ENCODE measurements at regions of chr20 and their contacts with region 1.

Region 1: DNA sequence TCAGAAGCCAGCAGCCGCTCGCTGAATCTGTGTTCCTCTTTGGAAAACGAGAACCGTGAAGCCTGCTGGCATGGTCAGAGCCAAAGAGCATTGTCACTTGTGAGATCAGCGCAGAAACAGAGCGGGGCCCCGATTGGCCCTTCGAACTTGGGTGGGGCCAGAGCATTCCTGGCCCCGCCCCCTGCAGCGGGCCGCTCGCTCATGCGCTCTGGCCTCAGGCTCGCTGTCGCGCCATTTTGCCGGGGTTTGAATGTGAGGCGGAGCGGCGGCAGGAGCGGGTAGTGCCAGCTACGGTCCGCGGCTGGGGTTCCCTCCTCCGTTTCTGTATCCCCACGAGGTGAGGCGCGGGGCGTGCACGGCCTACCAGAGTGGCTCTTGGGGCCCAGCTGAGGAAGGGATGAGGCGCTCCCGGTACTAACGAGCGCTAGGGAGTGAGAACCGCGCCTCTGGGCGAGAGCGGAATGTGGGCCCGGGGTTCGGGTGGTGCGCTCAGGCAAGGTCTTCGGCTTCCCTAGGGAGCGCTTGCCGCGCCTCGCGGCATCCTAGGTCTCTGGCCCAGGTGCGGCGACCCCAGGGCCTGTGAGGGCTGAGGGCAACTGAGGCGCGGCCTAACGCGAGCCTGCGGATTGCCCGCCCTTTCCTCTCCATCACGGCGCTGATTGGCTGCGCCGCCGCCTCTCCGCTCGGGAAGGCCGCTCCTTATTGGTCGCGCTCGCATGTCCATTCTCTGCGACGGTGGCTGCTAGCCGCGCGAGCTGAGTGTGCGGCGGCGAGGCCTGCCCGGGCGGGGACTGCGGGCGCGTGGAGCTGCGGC is at the start of gene CSE1L:
- DNase-seq: peak; percentile 95
- ATAC-seq: peak; percentile 86
- H3K4me3 Mint-ChIP-seq: peak within 1 kb of the TSS; percentile 97
- H3K27ac Mint-ChIP-seq: peak within 1 kb of the TSS; percentile 94
- H3K4me1 Mint-ChIP-seq: peaks cover 31% of the 10 kb centered on the region
- H3K27me3 Mint-ChIP-seq: no peaks in the 10 kb centered on the region
- CTCF ChIP-seq: no peak
- total RNA-seq, gene CSE1L: 53.2 and 58.8 TPM in 2 replicates

Region 2: GRCh38 chr20:48921151-48921898 is 125.0 kb before region 1 on chr20 and contains the start of gene ARFGEF2:
- CTCF ChIA-PET with region 1: no interaction called
- POLR2A ChIA-PET with region 1: interaction called, 4 read pairs
- intact Hi-C with region 1: loop called (anchors 5 kb)
- DNase-seq: peak; percentile 96
- ATAC-seq: peak; percentile 90
- H3K4me3 Mint-ChIP-seq: peak within 1 kb of the TSS; percentile 93
- H3K27ac Mint-ChIP-seq: peak within 1 kb of the TSS; percentile 95
- H3K4me1 Mint-ChIP-seq: peaks cover 58% of the 10 kb centered on the region
- H3K27me3 Mint-ChIP-seq: no peaks in the 10 kb centered on the region
- CTCF ChIP-seq: no peak
- total RNA-seq, gene ARFGEF2: 30.8 and 39.0 TPM in 2 replicates

Region 3: GRCh38 chr20:49157146-49157545 is 110.9 kb after region 1 on chr20:
- CTCF ChIA-PET with region 1: no interaction called
- POLR2A ChIA-PET with region 1: interaction called, 10 read pairs
- intact Hi-C with region 1: no loop called
- DNase-seq: no peak
- ATAC-seq: no peak
- H3K4me3 Mint-ChIP-seq: no peak overlapping the region
- H3K27ac Mint-ChIP-seq: no peak overlapping the region
- H3K4me1 Mint-ChIP-seq: peaks cover 11% of the 10 kb centered on the region
- H3K27me3 Mint-ChIP-seq: no peaks in the 10 kb centered on the region
- CTCF ChIP-seq: no peak